Activated CD4-positive, alpha-beta T cell treated with anti-CD3 and anti-CD28 coated beads, Interleukin-2, amount 10 ng/mL, durations not matched to agents 24 days and 14 days (primary cell): ENCODE measurements at regions of chr7 and their contacts with region 1.

Region 1: DNA sequence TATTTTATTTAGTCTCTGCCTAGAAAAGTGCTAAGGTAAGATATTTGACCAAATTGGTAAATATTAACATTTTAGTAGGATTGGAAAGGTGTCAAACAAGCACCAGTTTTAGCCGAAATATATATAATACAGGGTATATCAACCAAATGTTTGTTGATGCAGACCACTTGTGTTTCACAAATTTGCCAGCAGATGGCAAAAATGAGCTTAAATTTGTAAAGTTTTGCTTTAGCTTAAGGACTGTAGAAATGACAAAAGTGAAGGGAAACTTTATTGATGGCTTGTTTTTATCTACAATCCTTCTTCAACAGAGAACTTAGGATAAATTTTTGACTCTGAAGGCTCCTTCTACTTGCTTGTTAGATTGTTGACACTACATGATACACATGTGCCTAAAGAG is 4.8 kb upstream of the POLR1F start:
- DNase-seq: peak; percentile 83
- H3K4me3 Mint-ChIP-seq: no peak overlapping the region
- H3K27ac Mint-ChIP-seq: no peak overlapping the region
- H3K4me1 Mint-ChIP-seq: peaks cover 10% of the 10 kb centered on the region
- H3K27me3 Mint-ChIP-seq: peaks cover 17% of the 10 kb centered on the region

Region 2: DNA sequence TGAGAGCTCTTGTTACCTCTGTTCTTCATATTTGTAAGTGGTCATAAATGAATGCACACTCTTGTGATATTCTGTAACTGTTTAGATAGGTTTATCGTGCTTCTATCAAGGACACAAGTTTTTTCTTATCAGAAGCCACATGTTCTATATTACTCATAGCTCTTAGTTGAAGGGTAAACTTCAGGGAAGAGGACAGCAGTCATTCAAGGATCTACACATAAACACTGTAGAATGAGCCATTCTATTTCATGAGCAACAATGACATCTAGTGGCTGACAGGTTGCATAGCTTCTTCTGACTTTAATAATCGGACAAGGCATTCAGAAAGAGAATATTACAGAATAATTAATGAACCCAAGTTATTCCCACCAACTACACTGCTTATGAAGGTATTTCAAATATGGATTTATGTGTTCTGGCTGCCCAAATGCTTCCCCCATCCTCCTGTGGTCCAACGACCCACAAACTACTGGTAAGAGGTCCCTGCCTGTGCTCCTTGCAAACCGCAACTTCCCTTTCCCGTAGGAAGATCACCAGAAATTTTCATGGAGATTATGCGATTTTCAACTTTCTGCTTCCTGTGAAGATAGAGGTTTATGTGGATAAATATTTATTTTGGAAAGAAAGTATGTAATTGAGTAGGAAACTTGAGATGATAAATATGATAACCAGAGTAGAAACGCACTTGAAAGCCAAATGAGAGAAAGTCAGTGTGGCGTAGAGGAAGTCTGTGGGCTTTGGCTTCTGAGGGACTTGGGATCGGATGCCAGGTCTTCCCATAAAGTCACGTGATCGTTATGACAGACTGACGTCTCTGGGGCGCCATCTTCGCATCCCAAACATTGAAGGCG is 885.0 kb after region 1 on chr7:
- intact Hi-C with region 1: loop called (anchors 1 kb)
- DNase-seq: peak; percentile 57
- H3K4me3 Mint-ChIP-seq: no peak overlapping the region
- H3K27ac Mint-ChIP-seq: no peak overlapping the region
- H3K4me1 Mint-ChIP-seq: no peaks in the 10 kb centered on the region
- H3K27me3 Mint-ChIP-seq: peaks cover 3% of the 10 kb centered on the region